Breast epithelium (tissue), 4 donors: ENCODE measurements at regions of chr4 and their contacts with region 1.

Region 1: DNA sequence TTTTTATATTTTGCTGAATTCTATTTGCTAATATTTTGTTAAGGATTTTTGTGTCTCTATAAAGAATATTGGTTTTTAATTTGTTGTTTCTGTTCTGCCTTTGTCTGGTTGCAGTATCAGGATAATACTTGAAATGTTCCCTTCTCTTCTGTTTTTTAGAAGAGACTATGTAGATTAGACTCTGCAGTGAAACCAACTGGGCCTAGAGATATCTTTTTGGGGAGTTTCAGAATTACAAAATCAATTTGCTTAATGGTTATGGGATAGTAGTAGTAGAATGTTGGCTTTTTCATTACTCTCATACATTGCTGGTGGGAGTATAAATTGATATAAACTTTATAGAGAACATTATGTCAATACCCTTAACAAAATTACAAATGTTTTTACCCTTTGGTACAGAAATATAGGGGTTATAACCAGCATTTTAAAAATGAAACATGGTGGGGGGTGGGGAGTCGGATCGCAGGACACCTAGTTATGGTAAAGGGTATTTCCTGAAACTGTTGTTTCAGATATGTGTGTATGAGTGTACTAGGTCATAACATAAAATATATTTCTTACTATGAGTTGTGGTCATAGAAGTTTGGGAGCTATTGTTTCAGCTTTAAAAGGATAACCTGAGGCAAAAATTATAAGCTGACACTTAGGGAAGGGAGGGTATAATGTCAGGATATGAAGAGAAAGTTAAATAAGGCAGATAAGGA is 29.0 kb downstream of the CLOCK start:
- DNase-seq: no peak
- H3K4me3 ChIP-seq: no peak overlapping the region
- H3K27ac ChIP-seq: no peak overlapping the region
- H3K4me1 ChIP-seq: no peaks in the 10 kb centered on the region
- H3K27me3 ChIP-seq: no peaks in the 10 kb centered on the region
- CTCF ChIP-seq: no peak
- POLR2A ChIP-seq: no peak

Region 2: GRCh38 chr4:56910172-56910967 is 1392.7 kb after region 1 on chr4:
- intact Hi-C with region 1: loop called (anchors 5 kb)
- DNase-seq: no peak
- H3K4me3 ChIP-seq: peak overlapping the region in 2 of 3 donors; percentile 86 to 97
- H3K27ac ChIP-seq: no peak overlapping the region
- H3K4me1 ChIP-seq: peaks cover 0 to 10% of the 10 kb centered on the region in 2 donors
- H3K27me3 ChIP-seq: no peaks in the 10 kb centered on the region
- CTCF ChIP-seq: no peak
- POLR2A ChIP-seq: no peak